T-cell (primary cell): ENCODE measurements at regions of chr3 and their contacts with region 1.

Region 1: DNA sequence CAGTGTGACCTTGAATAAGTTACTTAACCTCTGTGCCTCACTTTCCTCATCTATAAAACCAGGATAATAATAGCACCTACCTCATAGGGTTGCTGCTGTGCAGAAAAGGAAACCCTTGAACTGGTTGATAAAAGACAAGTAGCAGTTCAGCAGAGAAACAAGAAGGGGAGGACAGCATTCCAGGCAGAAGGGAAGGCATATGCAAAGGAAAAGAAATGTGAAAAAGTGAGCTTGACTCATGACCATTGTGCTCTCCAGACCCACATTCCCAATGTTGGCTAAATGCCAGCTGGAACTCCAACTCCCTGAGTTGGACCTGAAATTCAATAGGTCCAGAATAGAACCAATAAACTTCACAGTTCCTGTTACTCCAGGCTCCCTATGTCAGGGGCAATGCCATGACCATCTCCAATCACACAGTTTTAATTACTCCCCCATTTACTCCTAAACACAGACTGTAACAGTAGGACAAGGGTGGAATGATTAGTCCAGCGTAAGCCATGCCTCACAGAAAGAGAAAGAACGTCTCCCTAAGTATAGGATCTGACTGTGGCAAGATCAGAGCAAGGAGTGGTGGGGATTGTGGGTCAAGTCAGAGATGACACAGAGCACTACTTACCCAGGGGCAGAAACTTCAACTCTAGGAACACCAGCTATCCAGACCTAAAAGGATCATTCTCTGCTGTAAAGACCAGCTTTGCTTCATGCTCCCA is 26.9 kb downstream of the PRKAR2A start:
- DNase-seq: no peak
- ATAC-seq: no peak
- H3K4me3 ChIP-seq: no peak overlapping the region
- H3K4me3 Mint-ChIP-seq: no peak overlapping the region
- H3K27ac ChIP-seq: no peak overlapping the region
- H3K27ac Mint-ChIP-seq: peak overlapping the region in 1 of 2 donors; percentile 34
- H3K4me1 ChIP-seq: no peaks in the 10 kb centered on the region
- H3K4me1 Mint-ChIP-seq: peaks cover 45 to 48% (median 47%) of the 10 kb centered on the region in 3 donors
- H3K27me3 ChIP-seq: no peaks in the 10 kb centered on the region
- H3K27me3 Mint-ChIP-seq: no peaks in the 10 kb centered on the region

Region 2: DNA sequence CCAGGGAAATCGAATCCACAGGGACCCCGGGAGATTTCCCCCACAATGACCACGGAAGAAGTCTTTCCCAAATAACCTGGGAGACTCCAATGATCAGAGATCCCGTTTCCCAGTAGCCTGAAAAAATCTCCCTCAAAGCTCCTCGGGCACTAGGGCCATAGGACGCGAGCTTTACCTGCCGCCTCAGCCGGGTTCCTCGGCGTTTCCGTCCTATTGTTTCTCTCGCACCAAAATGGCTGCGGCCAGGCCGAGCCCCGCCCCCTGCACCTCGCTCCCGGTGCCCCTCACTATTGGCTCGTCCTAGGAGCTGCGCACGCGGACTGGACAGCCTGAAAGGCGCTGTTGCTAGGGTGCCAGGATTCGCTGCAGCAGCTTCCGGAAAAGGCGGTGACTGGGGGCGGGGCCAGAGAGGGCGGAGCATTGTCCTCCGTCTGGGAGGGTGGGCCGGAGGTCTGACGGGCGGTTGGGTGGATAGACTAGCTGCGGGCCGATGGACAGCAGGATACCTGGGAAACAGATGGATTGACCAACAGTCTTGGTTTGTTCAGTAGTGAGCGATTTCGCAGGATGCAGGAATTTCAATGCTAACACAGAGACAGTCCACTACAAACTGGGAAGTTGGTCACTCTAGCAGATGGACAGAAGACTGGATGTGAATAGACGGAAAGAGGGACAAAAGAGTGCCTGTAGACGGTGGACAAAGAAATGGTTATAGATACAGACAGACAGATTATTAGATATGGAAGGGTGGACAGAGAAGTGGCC is 103.6 kb before region 1 on chr3 and contains the start of gene IP6K2:
- CTCF ChIA-PET with region 1: interaction called in 1 of 2 experiments, 10 read pairs
- POLR2A ChIA-PET with region 1: no interaction called
- DNase-seq: peak; percentile 96 to 99 (median 98)
- ATAC-seq: peak; percentile 99
- H3K4me3 ChIP-seq: peak within 1 kb of the TSS; percentile 87 to 100
- H3K4me3 Mint-ChIP-seq: peak within 1 kb of the TSS; percentile 93 to 99 (median 98)
- H3K27ac ChIP-seq: peak within 1 kb of the TSS; percentile 72
- H3K27ac Mint-ChIP-seq: peak within 1 kb of the TSS; percentile 83 to 95
- H3K4me1 ChIP-seq: peaks cover 9 to 37% of the 10 kb centered on the region in 2 experiments
- H3K4me1 Mint-ChIP-seq: peaks cover 44 to 48% (median 44%) of the 10 kb centered on the region in 3 donors
- H3K27me3 ChIP-seq: no peaks in the 10 kb centered on the region
- H3K27me3 Mint-ChIP-seq: no peaks in the 10 kb centered on the region
- total RNA-seq, gene IP6K2: 69.0 to 95.7 (median 77.6) TPM

Region 3: DNA sequence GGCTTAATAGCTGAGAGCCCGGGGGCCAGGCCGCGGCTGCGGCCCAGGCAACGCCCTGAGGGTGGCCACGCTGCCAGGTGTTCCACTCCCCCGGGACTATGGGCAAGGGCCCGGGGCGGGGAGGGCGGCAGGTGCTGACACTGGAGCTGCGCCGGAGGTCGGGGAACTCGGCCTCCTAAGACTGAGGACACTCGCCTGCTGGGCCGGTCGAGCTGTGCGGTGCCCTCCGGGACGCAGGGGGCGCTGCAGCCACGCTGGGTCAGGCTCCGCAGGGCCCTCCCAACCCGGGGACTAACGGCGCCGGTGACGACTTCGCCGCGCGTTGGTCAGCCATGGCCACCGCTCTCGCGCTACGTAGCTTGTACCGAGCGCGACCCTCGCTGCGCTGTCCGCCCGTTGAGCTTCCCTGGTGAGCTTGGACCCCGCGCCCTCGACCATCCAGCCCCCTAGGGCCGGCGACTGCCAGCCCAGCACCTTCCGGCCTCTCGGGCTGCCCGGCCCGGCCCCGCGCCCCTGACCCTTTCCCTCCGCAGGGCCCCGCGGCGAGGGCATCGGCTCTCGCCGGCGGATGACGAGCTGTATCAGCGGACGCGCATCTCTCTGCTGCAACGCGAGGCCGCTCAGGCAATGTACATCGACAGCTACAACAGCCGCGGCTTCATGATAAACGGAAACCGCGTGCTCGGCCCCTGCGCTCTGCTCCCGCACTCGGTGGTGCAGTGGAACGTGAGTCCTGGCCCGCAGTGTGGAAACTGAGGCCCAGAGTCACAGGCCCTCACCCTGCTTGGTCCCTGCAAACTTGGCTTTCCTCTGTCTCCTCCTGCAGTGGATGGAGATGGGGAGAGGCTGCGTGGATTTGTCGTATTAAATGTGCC is 201.3 kb after region 1 on chr3 and contains the start of gene NDUFAF3:
- CTCF ChIA-PET with region 1: no interaction called
- POLR2A ChIA-PET with region 1: no interaction called
- DNase-seq: peak; percentile 74 to 95 (median 87)
- ATAC-seq: peak; percentile 76 to 83 (median 82)
- H3K4me3 ChIP-seq: peak within 1 kb of the TSS; percentile 85 to 90
- H3K4me3 Mint-ChIP-seq: peak within 1 kb of the TSS; percentile 90 to 93 (median 91)
- H3K27ac ChIP-seq: peak within 1 kb of the TSS; percentile 75
- H3K27ac Mint-ChIP-seq: peak within 1 kb of the TSS; percentile 96 to 98
- H3K4me1 ChIP-seq: peaks cover 20 to 53% of the 10 kb centered on the region in 2 experiments
- H3K4me1 Mint-ChIP-seq: peaks cover 55 to 64% (median 58%) of the 10 kb centered on the region in 3 donors
- H3K27me3 ChIP-seq: no peaks in the 10 kb centered on the region
- H3K27me3 Mint-ChIP-seq: no peaks in the 10 kb centered on the region
- total RNA-seq, gene NDUFAF3: 62.8 to 92.1 (median 78.1) TPM

Region 4: GRCh38 chr3:49035281-49035680 is 214.5 kb after region 1 on chr3:
- CTCF ChIA-PET with region 1: no interaction called
- POLR2A ChIA-PET with region 1: interaction called in 1 of 2 experiments, 11 read pairs
- DNase-seq: no peak
- ATAC-seq: no peak
- H3K4me3 ChIP-seq: no peak overlapping the region
- H3K4me3 Mint-ChIP-seq: no peak overlapping the region
- H3K27ac ChIP-seq: no peak overlapping the region
- H3K27ac Mint-ChIP-seq: no peak overlapping the region
- H3K4me1 ChIP-seq: no peaks in the 10 kb centered on the region
- H3K4me1 Mint-ChIP-seq: no peaks in the 10 kb centered on the region
- H3K27me3 ChIP-seq: no peaks in the 10 kb centered on the region
- H3K27me3 Mint-ChIP-seq: no peaks in the 10 kb centered on the region